ENCODE measurements at regions of chr2 and their contacts with region 1.

Region 1: DNA sequence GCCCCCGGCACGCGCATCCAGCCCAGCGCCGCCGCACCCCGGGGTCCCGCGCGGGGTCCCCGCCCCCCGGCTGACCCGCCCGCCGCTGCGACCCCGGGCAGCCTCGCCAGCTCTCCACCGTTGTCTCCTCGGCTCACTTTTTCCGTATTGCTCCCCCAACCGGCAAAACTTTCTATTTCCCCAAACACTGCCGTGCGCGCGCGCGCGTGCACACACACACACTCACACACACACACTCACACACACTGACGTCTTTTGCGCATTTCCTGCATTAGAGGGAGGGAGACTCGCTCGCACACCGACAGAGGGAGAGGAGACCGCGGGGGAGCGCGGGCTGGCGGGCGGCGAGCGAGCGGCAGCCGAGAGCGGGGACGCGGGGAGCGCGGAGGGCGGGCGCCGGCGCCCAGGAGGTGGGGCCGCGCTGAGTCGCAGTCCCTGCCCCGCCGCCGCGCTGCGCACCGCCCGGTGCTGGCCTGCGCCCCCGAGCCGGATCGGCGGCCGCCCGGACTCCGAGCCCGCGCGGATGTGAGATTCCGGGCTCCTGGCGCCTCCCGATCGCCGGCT is 542 bp upstream of the PRKCE start:
- DNase-seq: peak; percentile 90
- ATAC-seq: peak; percentile 89
- H3K4me3 Mint-ChIP-seq: peak overlapping the region; percentile 92
- H3K27ac Mint-ChIP-seq: peak overlapping the region; percentile 95
- H3K4me1 Mint-ChIP-seq: peaks cover 52% of the 10 kb centered on the region
- H3K27me3 Mint-ChIP-seq: peaks cover 2% of the 10 kb centered on the region
- CTCF ChIP-seq: no peak

Region 2: DNA sequence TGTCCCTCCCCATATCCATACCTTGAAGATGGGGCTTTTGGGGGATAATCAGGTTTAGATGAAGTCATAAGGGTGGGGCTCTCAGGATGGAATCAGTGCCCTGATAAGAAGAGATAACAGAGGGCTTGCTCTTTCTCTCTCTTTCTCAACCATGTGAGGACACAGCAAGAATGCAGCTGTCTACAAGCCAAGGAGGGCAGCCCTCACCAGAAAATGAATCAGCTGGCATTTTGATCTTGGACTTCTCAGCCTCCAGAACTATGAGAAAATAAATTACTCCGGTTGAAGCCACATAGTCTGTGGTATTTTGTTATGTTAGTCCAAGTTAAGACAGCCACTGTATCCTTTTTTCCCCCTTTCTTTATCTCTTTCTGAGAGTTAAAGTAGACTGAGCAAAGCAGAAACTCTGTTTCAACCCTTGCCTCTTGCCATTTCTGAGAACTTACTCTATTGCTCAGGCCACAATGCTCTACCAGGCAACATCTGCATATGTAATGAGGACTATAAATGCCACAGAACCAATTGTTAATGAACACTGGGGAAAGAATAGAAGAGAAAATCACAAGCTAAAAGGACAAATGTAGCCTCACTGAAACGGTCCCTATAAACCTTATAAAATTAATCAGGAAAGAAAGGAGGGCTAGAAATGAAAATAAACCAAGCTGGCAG is 96.7 kb before region 1 on chr2:
- CTCF ChIA-PET with region 1: no interaction called
- POLR2A ChIA-PET with region 1: no interaction called
- intact Hi-C with region 1: no loop called
- DNase-seq: no peak
- ATAC-seq: no peak
- H3K4me3 Mint-ChIP-seq: no peak overlapping the region
- H3K27ac Mint-ChIP-seq: no peak overlapping the region
- H3K4me1 Mint-ChIP-seq: no peaks in the 10 kb centered on the region
- H3K27me3 Mint-ChIP-seq: no peaks in the 10 kb centered on the region
- CTCF ChIP-seq: no peak

Region 3: GRCh38 chr2:45669032-45669486 is 18.1 kb after region 1 on chr2:
- CTCF ChIA-PET with region 1: interaction called, 4 read pairs
- POLR2A ChIA-PET with region 1: interaction called, 8 read pairs
- intact Hi-C with region 1: loop called (anchors 2 kb)
- DNase-seq: no peak
- ATAC-seq: no peak
- H3K4me3 Mint-ChIP-seq: no peak overlapping the region
- H3K27ac Mint-ChIP-seq: no peak overlapping the region
- H3K4me1 Mint-ChIP-seq: peaks cover 35% of the 10 kb centered on the region
- H3K27me3 Mint-ChIP-seq: no peaks in the 10 kb centered on the region
- CTCF ChIP-seq: no peak

Region 4: DNA sequence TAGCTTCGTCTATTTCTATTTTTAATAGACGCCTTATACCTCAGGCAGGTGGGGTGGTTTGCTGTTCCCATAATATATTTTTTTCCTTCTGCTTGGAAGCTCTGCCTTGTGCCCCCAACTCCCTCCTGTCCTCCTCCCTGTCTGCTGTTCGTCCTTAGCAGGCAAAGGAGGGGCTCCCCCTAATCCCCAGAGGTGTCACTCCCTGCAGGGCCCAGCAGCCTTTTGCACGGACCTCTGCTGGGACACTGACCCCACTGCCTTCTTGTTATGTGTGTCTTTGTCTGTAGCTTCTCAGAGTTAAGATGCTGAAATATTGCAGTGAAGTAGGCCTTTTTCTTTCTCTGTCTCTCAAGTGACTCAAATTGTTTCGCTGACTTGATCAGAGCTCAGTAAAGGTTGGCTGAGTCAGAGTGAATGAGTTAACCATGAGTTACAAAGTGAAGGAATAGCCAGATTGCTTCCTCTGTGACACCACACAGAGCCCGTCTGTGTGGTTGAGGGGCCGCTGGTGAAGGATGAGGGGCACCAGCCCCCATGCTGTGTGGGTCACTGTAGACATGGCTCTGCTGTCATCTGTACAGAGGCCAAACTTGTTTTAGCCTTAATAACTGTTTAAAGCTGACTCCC is 48.2 kb after region 1 on chr2:
- CTCF ChIA-PET with region 1: no interaction called
- POLR2A ChIA-PET with region 1: interaction called, 27 read pairs
- intact Hi-C with region 1: loop called (anchors 1 kb)
- DNase-seq: no peak
- ATAC-seq: peak; percentile 61
- H3K4me3 Mint-ChIP-seq: peak overlapping the region; percentile 57
- H3K27ac Mint-ChIP-seq: peak overlapping the region; percentile 89
- H3K4me1 Mint-ChIP-seq: peaks cover 61% of the 10 kb centered on the region
- H3K27me3 Mint-ChIP-seq: no peaks in the 10 kb centered on the region
- CTCF ChIP-seq: no peak

Region 5: DNA sequence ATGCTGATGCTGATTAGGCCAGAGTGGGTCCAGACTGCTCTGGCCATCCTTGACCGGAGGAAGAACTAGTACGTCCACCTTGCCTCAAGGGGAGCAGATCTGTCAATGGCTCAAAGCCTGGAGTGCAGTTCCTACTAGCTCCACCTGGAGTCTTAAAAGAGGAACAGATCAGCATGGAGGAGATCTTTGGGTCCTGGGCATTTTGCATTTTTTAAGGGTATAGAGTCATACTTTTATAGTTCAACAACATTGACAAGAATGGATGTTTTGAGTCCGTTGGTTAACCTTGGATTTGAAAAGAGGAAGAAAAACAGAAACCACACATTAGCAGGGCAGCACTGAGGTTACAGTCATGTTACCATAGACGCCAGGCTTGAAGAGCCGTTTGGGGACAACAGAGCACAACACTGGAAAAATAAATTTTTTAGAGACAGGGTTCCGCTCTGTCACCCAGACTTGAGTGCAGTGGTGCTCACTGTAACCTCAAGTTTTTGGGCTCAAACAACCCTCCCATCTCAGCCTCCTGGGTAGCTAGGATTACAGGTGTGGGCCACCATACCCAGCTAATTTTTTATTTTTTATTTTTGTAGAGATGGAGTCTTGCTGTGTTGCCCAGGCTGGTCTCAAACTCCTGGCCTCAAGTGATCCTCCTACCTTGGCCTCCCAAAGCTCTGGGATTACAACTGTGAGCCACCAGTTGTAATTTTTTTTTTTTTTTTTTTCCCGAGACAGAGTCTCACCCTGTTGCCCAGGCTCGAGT is 79.0 kb after region 1 on chr2:
- CTCF ChIA-PET with region 1: interaction called, 19 read pairs
- POLR2A ChIA-PET with region 1: interaction called, 211 read pairs
- intact Hi-C with region 1: loop called (anchors 1 kb)
- DNase-seq: peak; percentile 36
- ATAC-seq: peak; percentile 56
- H3K4me3 Mint-ChIP-seq: peak overlapping the region; percentile 59
- H3K27ac Mint-ChIP-seq: peak overlapping the region; percentile 98
- H3K4me1 Mint-ChIP-seq: peaks cover 91% of the 10 kb centered on the region
- H3K27me3 Mint-ChIP-seq: no peaks in the 10 kb centered on the region
- CTCF ChIP-seq: no peak

Region 6: GRCh38 chr2:45833968-45834344 is 183.0 kb after region 1 on chr2:
- CTCF ChIA-PET with region 1: interaction called, 8 read pairs
- POLR2A ChIA-PET with region 1: interaction called, 12 read pairs
- intact Hi-C with region 1: loop called (anchors 1 kb)
- DNase-seq: peak; percentile 29
- ATAC-seq: peak; percentile 75
- H3K4me3 Mint-ChIP-seq: peak overlapping the region; percentile 39
- H3K27ac Mint-ChIP-seq: peak overlapping the region; percentile 94
- H3K4me1 Mint-ChIP-seq: peaks cover 71% of the 10 kb centered on the region
- H3K27me3 Mint-ChIP-seq: no peaks in the 10 kb centered on the region
- CTCF ChIP-seq: no peak

Region 7: DNA sequence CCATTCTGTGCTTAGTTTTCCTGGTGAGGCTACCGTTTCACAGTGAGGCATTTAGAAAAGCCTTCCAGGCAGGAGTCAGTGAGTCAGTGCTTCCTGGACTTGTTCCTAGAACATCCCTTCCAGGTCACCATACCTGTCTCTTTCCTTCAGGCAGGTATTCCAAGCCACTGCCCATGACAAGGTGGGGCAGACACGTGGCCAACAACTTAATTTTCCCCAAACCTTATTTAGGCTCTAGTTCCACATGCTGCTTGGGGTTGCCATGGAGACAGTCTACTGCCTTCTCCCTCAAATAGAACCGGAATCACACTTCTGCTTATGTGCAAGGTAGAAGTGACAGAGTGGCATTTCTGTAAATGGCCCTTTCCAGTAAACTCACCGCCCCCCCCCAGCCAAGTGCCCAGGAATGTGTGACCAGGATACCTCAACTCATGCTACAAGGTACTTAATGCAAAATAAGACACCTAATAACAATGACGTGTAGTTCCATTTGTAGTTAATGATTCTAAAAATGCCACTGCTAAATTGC is 258.8 kb after region 1 on chr2:
- CTCF ChIA-PET with region 1: no interaction called
- POLR2A ChIA-PET with region 1: interaction called, 3 read pairs
- intact Hi-C with region 1: loop called (anchors 1 kb)
- DNase-seq: no peak
- ATAC-seq: peak; percentile 84
- H3K4me3 Mint-ChIP-seq: peak overlapping the region; percentile 53
- H3K27ac Mint-ChIP-seq: peak overlapping the region; percentile 73
- H3K4me1 Mint-ChIP-seq: peaks cover 70% of the 10 kb centered on the region
- H3K27me3 Mint-ChIP-seq: no peaks in the 10 kb centered on the region
- CTCF ChIP-seq: no peak

Measured in activated B cell treated with CpG ODN at 0.5 μM for 24 hours (primary cell).